ENCODE measurements at regions of chr1 and their contacts with region 1.

Region 1: GRCh38 chr1:45490626-45491486 is at the start of gene TESK2:
- DNase-seq: peak; percentile 98
- H3K4me3 Mint-ChIP-seq: no peak within 1 kb of the TSS
- H3K27ac Mint-ChIP-seq: no peak within 1 kb of the TSS
- H3K4me1 Mint-ChIP-seq: peaks cover 8% of the 10 kb centered on the region
- H3K27me3 Mint-ChIP-seq: no peaks in the 10 kb centered on the region

Region 2: GRCh38 chr1:45011837-45012638 is 478.8 kb before region 1 on chr1 and contains the start of gene UROD:
- CTCF ChIA-PET with region 1: interaction called, 58 read pairs
- DNase-seq: peak; percentile 95
- H3K4me3 Mint-ChIP-seq: peak within 1 kb of the TSS; percentile 74
- H3K27ac Mint-ChIP-seq: peak within 1 kb of the TSS; percentile 88
- H3K4me1 Mint-ChIP-seq: peaks cover 42% of the 10 kb centered on the region
- H3K27me3 Mint-ChIP-seq: no peaks in the 10 kb centered on the region

Region 3: DNA sequence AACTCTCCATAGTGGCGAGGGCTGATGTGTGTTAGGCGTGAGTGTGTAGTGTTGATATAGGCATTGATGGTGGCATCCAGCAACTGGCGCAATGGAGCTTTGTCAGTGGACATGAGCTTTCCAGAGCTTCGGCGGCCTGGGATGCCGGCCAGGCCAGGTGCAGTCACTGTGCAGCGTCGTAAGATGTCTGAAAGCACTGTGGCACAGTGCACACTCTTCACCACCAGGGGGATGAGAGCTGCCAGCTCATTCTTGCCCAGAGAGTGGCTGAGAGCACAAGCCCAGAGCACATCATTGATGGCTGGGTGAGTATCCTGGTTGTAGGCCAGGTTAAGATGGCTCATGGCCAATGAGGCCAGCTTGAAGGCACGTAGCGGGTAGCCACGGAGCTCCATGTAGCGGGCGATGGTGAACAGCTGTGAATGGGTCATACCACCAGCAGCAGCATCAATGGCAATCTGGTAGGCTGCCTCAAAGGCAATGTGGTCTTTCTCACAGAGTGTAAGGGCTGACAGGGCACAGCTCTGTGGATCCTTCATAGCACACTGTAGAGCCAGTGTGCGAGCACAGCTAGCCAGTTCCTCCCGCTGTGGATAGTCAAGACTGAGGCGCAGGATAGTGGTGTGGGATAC is 472.1 kb before region 1 on chr1:
- CTCF ChIA-PET with region 1: interaction called, 58 read pairs
- DNase-seq: peak; percentile 74
- H3K4me3 Mint-ChIP-seq: no peak overlapping the region
- H3K27ac Mint-ChIP-seq: no peak overlapping the region
- H3K4me1 Mint-ChIP-seq: peaks cover 8% of the 10 kb centered on the region
- H3K27me3 Mint-ChIP-seq: no peaks in the 10 kb centered on the region

Region 4: GRCh38 chr1:45291716-45292115 is 199.1 kb before region 1 on chr1:
- CTCF ChIA-PET with region 1: no interaction called
- DNase-seq: no peak
- H3K4me3 Mint-ChIP-seq: no peak overlapping the region
- H3K27ac Mint-ChIP-seq: no peak overlapping the region
- H3K4me1 Mint-ChIP-seq: no peaks in the 10 kb centered on the region
- H3K27me3 Mint-ChIP-seq: no peaks in the 10 kb centered on the region

Region 5: DNA sequence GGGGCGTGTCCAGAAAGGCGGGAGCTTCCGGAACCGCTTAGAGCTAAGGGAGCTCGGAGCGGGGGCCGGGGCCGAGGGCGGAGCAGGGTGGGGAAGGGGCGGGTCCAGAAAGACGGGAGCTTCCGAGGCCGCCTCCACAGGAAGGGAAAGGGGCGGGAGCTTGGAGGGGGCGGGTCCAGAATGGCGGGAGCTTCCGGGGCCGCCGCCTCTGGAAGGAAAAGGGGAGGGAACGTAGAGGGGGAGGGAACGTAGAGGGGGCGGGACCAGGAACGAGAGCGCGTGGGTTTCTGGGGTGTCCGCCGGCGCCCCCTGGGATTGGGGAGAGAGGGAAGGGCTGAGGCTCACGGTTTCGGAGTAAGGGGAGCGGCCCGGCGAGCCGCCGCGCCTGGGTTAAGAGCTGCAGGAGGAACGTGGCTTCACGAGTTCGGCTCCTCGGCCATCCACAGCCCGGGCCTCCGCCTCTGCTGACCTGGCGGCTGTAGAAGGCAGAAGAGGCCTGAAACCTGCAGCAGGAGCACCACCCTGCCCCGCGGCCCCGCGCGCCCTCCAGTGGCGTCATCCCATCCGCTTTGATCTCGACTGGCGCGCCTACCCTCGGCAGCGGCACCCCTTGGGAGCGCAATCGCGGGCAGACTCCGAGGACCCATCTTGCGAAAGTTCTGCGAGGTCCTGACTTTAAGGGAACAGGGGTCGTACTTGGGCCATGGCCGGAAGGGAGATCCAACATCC is 187.1 kb before region 1 on chr1:
- CTCF ChIA-PET with region 1: interaction called, 13 read pairs
- DNase-seq: peak; percentile 99
- H3K4me3 Mint-ChIP-seq: peak overlapping the region; percentile 88
- H3K27ac Mint-ChIP-seq: peak overlapping the region; percentile 93
- H3K4me1 Mint-ChIP-seq: peaks cover 47% of the 10 kb centered on the region
- H3K27me3 Mint-ChIP-seq: no peaks in the 10 kb centered on the region

Region 6: DNA sequence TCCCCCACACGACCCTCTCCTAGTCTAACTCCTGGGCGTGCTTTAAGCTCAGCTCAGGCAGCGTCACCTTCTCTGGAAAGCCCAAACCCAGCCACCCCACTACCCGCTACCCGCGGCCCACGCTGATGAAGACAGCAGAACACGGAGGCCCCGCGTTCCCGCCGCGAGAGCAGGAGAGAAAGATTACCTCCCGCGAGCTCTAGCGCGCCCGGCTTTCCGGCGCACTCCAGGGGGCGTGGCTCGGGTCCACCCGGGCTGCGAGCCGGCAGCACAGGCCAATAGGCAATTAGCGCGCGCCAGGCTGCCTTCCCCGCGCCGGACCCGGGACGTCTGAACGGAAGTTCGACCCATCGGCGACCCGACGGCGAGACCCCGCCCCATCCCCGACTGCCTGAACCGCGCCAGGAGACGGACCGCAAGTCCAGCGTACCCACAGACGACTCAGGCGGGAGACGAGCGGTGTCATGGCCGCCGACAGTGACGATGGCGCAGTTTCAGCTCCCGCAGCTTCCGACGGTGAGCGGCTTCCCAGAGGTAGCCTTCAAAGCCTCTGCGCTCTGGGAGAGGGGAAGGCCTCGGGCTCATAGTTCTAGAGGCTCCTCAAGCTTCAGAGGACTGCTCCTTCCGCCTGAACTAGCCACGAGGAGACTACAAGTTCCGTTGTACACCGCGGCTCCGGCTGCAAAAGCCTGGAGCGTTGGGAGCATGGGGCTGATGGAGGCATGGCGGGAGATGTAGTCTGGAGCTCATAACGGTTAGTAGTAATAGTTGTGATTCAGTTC is 150.9 kb before region 1 on chr1 and contains the starts of genes MUTYH and TOE1:
- CTCF ChIA-PET with region 1: interaction called, 28 read pairs
- DNase-seq: peak; percentile 97
- H3K4me3 Mint-ChIP-seq: peak within 1 kb of the TSS; percentile 98
- H3K27ac Mint-ChIP-seq: peak within 1 kb of the TSS; percentile 99
- H3K4me1 Mint-ChIP-seq: peaks cover 54% of the 10 kb centered on the region
- H3K27me3 Mint-ChIP-seq: no peaks in the 10 kb centered on the region

Region 7: GRCh38 chr1:45359882-45360513 is 130.9 kb before region 1 on chr1:
- CTCF ChIA-PET with region 1: interaction called, 159 read pairs
- DNase-seq: peak; percentile 65
- H3K4me3 Mint-ChIP-seq: no peak overlapping the region
- H3K27ac Mint-ChIP-seq: no peak overlapping the region
- H3K4me1 Mint-ChIP-seq: peaks cover 5% of the 10 kb centered on the region
- H3K27me3 Mint-ChIP-seq: no peaks in the 10 kb centered on the region

Region 8: DNA sequence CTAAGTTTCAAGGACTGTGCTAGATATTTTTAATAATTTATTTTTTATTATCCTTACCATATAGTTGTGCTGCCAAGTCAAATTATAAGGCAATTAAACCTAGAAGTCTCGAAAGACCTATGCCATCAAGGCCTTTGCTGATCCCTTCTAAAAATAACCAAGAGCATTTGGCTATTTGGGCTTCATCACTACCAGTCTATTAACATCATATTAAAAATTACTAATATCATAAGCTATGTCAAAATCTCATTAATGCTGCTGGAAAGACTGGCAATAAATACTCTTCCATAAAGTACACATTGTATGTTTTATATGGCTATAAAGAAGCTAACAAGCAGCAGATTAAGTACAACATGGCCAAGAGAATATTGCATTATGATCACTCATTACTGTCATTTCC is 107.7 kb before region 1 on chr1:
- CTCF ChIA-PET with region 1: no interaction called
- DNase-seq: no peak
- H3K4me3 Mint-ChIP-seq: no peak overlapping the region
- H3K27ac Mint-ChIP-seq: no peak overlapping the region
- H3K4me1 Mint-ChIP-seq: no peaks in the 10 kb centered on the region
- H3K27me3 Mint-ChIP-seq: no peaks in the 10 kb centered on the region

Region 9: GRCh38 chr1:45569962-45570581 is 79.2 kb after region 1 on chr1:
- CTCF ChIA-PET with region 1: interaction called, 26 read pairs
- DNase-seq: peak; percentile 80
- H3K4me3 Mint-ChIP-seq: no peak overlapping the region
- H3K27ac Mint-ChIP-seq: no peak overlapping the region
- H3K4me1 Mint-ChIP-seq: no peaks in the 10 kb centered on the region
- H3K27me3 Mint-ChIP-seq: no peaks in the 10 kb centered on the region

Measured in activated naive CD4-positive, alpha-beta T cell treated with anti-CD3 and anti-CD28 coated beads, Interleukin-2, amount 10 ng/mL, durations not matched to agents 7 days and 5 days (primary cell).